Right ventricle myocardium superior (tissue), 1 donor: ENCODE measurements at regions of chr1 and their contacts with region 1.

Region 1: DNA sequence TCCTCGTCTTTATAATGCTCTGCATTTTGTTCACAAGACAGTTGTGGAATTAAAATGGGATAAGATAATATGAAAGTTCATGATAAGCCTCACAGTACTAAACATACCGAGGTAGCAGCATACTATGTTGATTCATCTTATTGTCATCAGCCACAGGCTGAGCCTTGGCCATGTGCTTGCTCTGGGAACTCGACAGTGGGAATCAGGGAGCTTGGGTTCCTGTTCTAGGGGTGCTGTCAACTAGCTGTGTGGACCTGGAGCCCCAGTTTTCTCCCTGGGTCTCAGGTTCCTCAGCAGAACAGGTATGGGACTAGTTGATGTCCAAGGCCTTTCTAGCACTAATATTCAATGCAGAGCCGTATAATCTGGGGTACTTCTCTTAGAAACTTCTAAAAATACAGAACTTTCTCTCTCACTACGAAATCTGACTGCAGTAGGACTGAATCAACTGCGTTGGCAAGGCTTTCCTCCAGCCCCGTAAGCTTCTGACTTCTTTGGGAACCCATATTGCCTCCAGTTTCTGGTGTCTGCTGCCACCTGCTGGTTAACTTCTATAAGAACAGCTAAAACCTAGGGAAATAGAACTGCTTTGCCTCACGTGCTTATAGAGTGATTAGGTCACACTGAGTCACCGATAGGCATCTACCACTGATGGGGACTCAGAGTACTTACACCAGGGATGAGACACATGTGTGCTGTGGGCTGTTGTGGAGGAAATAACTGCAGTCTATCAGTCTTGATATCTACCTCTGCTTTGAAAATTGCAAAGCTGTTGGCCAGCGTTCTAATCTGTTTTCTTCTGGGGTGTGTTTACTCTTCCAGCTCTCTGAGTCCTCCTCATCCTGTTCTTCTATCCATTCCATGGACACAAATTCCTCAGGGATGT is 110.9 kb downstream of the RGL1 start:
- DNase-seq: peak; percentile 59
- ATAC-seq: peak; percentile 86

Region 2: DNA sequence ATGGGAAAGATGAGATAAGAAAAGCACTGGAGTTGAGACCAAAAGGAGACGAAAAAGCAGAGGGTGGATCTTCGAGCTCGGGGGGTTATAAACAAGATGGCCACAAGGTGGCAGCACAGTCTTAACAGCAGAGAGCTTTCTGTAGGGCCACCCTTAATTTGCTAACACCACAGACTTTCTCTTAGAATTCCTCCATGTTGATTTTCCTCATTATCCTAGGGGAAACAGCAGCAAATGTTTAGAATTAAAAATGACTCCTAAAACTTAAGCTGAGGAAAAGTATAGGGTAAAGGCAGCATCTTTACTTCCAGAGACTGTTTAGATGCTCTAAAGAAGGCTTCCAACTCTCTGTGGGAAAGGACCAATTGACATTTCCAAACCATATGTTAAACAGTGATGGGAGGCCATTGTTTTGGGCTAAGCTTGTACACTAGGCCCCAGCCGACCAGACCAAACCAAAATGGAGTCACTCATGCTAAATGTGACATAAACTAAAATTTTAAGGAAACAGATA is 260.2 kb before region 1 on chr1:
- intact Hi-C with region 1: loop called (anchors 5 kb)
- DNase-seq: peak; percentile 84
- ATAC-seq: peak; percentile 79

Region 3: DNA sequence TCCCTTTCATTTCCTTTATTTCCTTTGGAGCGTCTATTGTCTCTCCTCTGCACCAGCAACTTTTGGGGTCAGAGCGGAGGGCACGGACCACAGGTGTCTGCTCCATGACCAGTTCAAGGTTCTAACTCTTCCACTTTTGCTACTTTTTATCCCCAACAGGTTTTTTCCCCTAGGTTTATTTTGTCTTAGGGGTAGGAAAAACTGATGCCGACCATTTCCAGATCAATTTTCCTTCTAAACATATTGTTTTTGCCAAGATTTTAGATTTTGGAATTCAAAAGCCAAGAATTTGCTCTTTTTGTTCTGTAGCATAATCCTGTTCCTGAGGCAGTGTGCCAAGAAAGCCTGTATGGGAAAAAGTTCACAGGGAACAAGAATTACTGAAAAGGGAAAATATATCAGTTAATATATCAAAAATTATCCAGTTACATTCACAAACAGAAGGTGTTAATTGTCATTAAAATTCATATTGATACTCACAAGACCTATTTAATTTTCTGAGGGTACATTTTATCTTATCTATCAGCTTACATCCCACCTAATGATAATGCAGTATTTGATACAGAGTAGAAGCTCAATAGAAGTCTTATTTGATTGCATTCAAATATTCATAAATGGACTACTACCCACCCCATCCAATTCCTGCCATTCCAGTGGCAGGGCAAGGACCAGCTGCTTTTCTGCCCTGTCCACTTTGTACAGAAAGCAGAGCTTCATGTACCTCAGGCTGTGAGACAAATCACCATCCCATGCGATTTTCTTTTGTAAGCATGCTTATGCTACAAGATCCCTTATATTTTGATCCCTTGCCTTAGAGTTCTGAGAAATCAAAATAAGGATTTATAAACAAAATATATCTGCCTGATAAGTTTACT is 166.9 kb after region 1 on chr1:
- intact Hi-C with region 1: no loop called
- DNase-seq: no peak
- ATAC-seq: no peak